ENCODE measurements at regions of chr12 and their contacts with region 1.

Region 1: GRCh38 chr12:6062757-6063735 is 61.4 kb downstream of the VWF start:
- DNase-seq: peak in 2 of 5 donors; percentile 52 to 56
- ATAC-seq: peak; percentile 29 to 67 (median 54)
- H3K4me3 ChIP-seq: no peak overlapping the region
- H3K27ac ChIP-seq: no peak overlapping the region
- H3K4me1 ChIP-seq: peaks cover 0 to 25% (median 0%) of the 10 kb centered on the region in 12 donors
- H3K27me3 ChIP-seq: no peaks in the 10 kb centered on the region
- CTCF ChIP-seq: peak; percentile 72 to 88 (median 84)
- POLR2A ChIP-seq: no peak

Region 2: DNA sequence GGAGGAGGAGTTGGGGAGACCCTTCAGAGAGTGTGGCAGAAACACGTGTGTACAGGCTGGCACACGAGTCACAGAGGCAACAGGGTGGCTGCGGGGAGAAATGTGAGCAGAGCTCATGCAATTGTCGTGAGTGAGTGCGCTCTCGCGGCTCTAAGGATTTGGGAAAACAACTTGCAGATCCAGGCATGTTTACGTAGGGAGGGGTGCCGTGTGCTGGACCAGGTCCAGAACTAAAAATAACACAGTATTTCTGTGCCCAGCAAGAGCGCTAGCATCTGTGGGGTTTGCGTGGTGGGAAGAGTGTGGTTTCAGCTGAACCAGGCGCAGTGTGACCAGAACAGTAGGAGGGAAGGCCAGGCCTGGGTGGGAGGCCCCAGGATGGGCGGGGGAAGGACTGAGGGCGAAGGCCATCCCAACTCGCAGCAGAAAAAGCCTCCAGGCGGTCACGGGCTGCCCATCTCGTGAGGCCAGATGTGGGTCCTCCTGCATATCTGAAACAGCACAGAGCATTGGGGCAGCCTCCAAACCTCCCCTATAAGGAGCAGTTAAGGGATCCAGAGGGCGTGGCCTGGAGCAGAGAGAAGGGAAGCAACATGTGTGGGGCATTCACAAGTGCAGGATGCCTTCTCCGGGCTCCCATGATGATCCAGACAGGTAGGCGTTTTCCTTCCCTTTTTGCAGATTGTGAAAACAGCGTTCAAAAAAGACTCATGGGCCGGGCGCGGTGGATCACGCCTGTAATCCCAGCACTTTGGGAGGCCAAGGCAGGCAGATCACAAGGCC is 119.3 kb after region 1 on chr12:
- intact Hi-C with region 1: loop called in 3 of 10 experiments (anchors 5 to 10 kb)
- DNase-seq: peak in 4 of 5 donors; percentile 68 to 75 (median 72)
- ATAC-seq: peak; percentile 41 to 81 (median 72)
- H3K4me3 ChIP-seq: no peak overlapping the region
- H3K27ac ChIP-seq: peak overlapping the region; percentile 52 to 88 (median 70)
- H3K4me1 ChIP-seq: peaks cover 5 to 53% (median 46%) of the 10 kb centered on the region in 12 donors
- H3K27me3 ChIP-seq: no peaks in the 10 kb centered on the region
- CTCF ChIP-seq: no peak
- POLR2A ChIP-seq: peak in 1 of 2 donors; percentile 30

Region 3: GRCh38 chr12:6187948-6188793 is 125.1 kb after region 1 on chr12:
- intact Hi-C with region 1: loop called in 5 of 10 experiments (anchors 5 to 10 kb)
- DNase-seq: no peak
- ATAC-seq: no peak
- H3K4me3 ChIP-seq: no peak overlapping the region
- H3K27ac ChIP-seq: peak overlapping the region in 3 of 12 donors; percentile 43 to 72 (median 50)
- H3K4me1 ChIP-seq: peaks cover 0 to 12% (median 7%) of the 10 kb centered on the region in 12 donors
- H3K27me3 ChIP-seq: no peaks in the 10 kb centered on the region
- CTCF ChIP-seq: no peak
- POLR2A ChIP-seq: no peak

Region 4: DNA sequence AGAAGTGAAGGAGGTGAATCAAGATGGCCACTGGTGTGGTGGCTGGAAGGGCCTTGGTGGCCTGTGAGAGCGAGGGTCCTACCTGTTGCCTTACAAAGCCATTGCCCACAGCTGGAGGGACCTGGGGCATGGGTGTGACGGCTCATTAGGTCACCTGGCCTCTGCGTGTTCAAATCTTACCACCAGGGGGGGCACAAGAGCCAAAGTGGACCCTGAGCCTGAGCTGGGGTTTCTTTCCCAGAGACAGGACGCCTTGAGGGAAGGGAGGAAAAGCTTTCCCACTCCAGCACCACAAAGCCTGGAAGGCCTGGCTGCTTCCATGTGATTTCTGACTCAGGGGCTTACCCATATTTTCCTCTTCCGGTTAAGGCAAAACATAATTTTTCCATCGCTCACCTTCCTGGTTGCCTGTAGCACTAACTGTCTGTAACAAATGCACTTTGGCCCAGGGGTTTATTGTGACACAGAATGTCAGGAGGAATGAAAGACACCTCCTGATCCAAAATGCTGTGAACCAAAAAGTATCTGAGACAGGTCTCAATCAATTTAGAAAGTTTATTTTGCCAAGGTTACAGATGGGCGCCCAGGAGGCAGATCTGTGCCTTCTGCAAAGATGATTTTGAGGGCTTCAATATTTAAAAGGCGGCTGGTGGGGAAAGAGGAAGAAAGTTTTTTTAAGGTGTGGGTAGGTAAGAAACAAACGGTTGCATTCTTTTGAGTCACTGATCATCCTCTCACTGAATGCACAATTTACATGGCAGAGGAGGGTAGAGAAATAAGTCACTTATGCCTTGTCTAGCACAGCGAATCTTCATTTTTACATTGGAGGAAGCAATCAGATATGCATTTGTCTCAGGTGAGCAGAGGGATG is 132.9 kb after region 1 on chr12:
- intact Hi-C with region 1: loop called in 5 of 10 experiments (anchors 2 to 10 kb)
- DNase-seq: peak; percentile 80 to 88 (median 88)
- ATAC-seq: peak; percentile 78 to 85 (median 81)
- H3K4me3 ChIP-seq: no peak overlapping the region
- H3K27ac ChIP-seq: peak overlapping the region; percentile 24 to 80 (median 52)
- H3K4me1 ChIP-seq: peaks cover 0 to 36% (median 13%) of the 10 kb centered on the region in 12 donors
- H3K27me3 ChIP-seq: peaks cover 0 to 12% (median 0%) of the 10 kb centered on the region in 9 donors
- CTCF ChIP-seq: peak; percentile 90 to 96 (median 94)
- POLR2A ChIP-seq: no peak

Region 5: GRCh38 chr12:6278439-6279255 is 215.6 kb after region 1 on chr12:
- intact Hi-C with region 1: loop called in 6 of 10 experiments (anchors 2 to 5 kb)
- DNase-seq: peak; percentile 87 to 92 (median 89)
- ATAC-seq: peak; percentile 76 to 94 (median 90)
- H3K4me3 ChIP-seq: peak overlapping the region; percentile 17 to 70 (median 59)
- H3K27ac ChIP-seq: peak overlapping the region; percentile 11 to 92 (median 84)
- H3K4me1 ChIP-seq: peaks cover 0 to 41% (median 32%) of the 10 kb centered on the region in 12 donors
- H3K27me3 ChIP-seq: no peaks in the 10 kb centered on the region
- CTCF ChIP-seq: peak; percentile 56 to 99 (median 92)
- POLR2A ChIP-seq: peak in 1 of 2 donors; percentile 37

Region 6: DNA sequence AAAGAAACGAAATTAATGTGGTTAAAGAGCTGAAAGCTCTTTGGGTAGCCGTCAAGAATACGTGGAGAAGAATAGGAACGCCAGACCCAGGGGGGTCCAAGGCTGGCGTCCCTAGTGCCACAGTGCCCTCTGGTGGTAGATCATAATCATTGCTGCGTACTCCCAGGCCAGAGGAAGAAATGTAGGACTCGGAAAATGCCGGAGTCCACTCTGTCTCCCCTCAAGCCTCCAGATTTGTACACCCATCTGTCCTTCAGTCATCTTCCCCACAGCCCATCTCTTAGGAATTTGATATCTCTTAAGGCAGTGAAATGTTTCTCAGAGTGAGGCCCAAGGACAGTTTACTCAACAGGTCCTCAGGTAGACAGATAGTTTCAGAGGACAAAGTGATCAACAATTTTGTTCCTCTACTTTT is 222.0 kb after region 1 on chr12:
- intact Hi-C with region 1: loop called in 7 of 10 experiments (anchors 1 to 5 kb)
- DNase-seq: peak in 2 of 5 donors; percentile 69 to 74
- ATAC-seq: peak; percentile 65 to 87 (median 80)
- H3K4me3 ChIP-seq: no peak overlapping the region
- H3K27ac ChIP-seq: no peak overlapping the region
- H3K4me1 ChIP-seq: peaks cover 0 to 11% (median 5%) of the 10 kb centered on the region in 12 donors
- H3K27me3 ChIP-seq: no peaks in the 10 kb centered on the region
- CTCF ChIP-seq: peak; percentile 86 to 98 (median 92)
- POLR2A ChIP-seq: no peak

Region 7: GRCh38 chr12:6383572-6384498 is 320.8 kb after region 1 on chr12 and contains the start of gene LTBR:
- intact Hi-C with region 1: loop called in 1 of 10 experiments (anchors 5 kb)
- DNase-seq: peak; percentile 96 to 99 (median 98)
- ATAC-seq: peak; percentile 92 to 98 (median 97)
- H3K4me3 ChIP-seq: peak within 1 kb of the TSS; percentile 45 to 92 (median 78)
- H3K27ac ChIP-seq: peak within 1 kb of the TSS; percentile 75 to 98 (median 94)
- H3K4me1 ChIP-seq: peaks cover 0 to 75% (median 24%) of the 10 kb centered on the region in 12 donors
- H3K27me3 ChIP-seq: no peaks in the 10 kb centered on the region
- CTCF ChIP-seq: peak in 3 of 12 donors; percentile 7 to 43 (median 32)
- POLR2A ChIP-seq: peak in 1 of 2 donors; percentile 74
- total RNA-seq, gene LTBR: 16.0 to 83.4 (median 26.2) TPM